Activated CD8-positive, alpha-beta T cell treated with anti-CD3 and anti-CD28 coated beads, Interleukin-2, amount 10 ng/mL, durations not matched to agents 7 days and 5 days (primary cell): ENCODE measurements at regions of chr11 and their contacts with region 1.

Region 1: DNA sequence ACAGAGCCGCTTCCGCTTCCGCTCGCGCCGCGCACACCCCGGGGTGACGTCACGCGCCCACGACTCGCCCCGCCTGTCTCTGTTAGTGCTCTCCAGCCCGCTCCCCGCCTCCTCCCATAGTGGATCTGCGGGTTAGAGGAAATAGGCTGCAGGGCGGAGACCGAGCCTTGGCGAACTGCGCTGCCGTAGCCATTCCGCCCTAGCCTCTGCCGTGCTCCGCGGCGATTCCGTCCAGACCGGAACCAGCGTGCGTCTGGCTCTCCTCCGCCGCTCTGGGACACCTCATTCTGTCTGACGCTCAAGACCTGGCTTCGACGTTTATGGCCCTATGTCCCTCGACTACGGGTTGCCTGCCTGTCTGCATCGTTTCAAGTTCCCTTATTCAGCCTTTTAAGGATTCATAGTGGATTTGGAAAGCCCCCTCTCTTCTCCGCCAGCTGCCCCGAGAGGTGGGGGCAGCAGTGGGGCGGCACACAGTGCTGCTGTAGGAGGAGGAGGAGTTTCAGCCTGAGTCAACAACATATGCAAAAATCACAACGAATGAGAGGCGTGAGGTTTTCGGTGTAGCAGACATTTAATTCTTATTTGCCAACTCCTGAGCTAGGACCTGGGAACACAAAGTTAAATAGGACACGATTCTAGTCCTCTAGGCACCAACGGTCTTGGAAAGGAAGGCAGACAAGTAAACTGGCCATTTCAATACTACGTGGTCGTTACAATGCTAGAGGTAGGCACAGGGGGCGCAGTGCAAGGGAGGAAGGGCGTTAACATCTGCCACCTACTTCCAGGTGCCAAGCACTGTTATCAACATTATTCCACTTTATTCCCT is at the start of gene TAF10:
- DNase-seq: peak; percentile 98
- ATAC-seq: peak; percentile 95
- H3K4me3 Mint-ChIP-seq: peak within 1 kb of the TSS; percentile 89
- H3K27ac Mint-ChIP-seq: peak within 1 kb of the TSS; percentile 92
- H3K4me1 Mint-ChIP-seq: peaks cover 42% of the 10 kb centered on the region
- H3K27me3 Mint-ChIP-seq: no peaks in the 10 kb centered on the region
- total RNA-seq, gene TAF10: 140 to 156 TPM

Region 2: GRCh38 chr11:6588018-6588417 is 24.4 kb before region 1 on chr11:
- CTCF ChIA-PET with region 1: no interaction called
- POLR2A ChIA-PET with region 1: no interaction called
- DNase-seq: no peak
- ATAC-seq: no peak
- H3K4me3 Mint-ChIP-seq: no peak overlapping the region
- H3K27ac Mint-ChIP-seq: no peak overlapping the region
- H3K4me1 Mint-ChIP-seq: no peaks in the 10 kb centered on the region
- H3K27me3 Mint-ChIP-seq: no peaks in the 10 kb centered on the region

Region 3: DNA sequence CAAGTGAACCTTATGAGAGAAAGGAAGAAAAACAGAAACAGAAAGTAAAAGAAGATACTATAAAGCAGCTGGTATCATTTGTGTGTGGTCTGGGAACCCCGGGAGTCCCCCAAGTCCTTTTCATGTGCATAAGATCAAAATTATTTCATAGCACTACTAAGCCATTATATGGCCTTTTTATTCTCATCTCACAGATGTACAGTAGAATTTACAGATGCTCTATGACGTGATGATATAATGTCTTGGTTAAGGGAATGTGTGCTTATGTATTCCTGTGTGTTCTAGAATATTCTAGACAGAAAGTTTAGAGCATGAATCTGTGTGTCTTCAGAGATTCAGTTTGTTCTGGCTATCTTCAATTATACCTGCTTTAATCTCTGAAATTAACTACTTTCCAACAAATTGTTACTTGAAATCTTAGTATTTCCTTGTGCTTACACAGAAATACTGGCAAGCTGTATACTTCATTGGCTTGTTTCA is 15.4 kb after region 1 on chr11:
- CTCF ChIA-PET with region 1: interaction called, 15 read pairs
- POLR2A ChIA-PET with region 1: interaction called, 16 read pairs
- DNase-seq: peak; percentile 47
- ATAC-seq: peak; percentile 69
- H3K4me3 Mint-ChIP-seq: peak overlapping the region; percentile 20
- H3K27ac Mint-ChIP-seq: peak overlapping the region; percentile 75
- H3K4me1 Mint-ChIP-seq: peaks cover 30% of the 10 kb centered on the region
- H3K27me3 Mint-ChIP-seq: no peaks in the 10 kb centered on the region

Region 4: GRCh38 chr11:6746086-6746618 is 133.7 kb after region 1 on chr11:
- CTCF ChIA-PET with region 1: interaction called, 12 read pairs
- POLR2A ChIA-PET with region 1: interaction called, 4 read pairs
- DNase-seq: peak; percentile 65
- ATAC-seq: peak; percentile 85
- H3K4me3 Mint-ChIP-seq: no peak overlapping the region
- H3K27ac Mint-ChIP-seq: no peak overlapping the region
- H3K4me1 Mint-ChIP-seq: peaks cover 41% of the 10 kb centered on the region
- H3K27me3 Mint-ChIP-seq: no peaks in the 10 kb centered on the region